Sigmoid colon (tissue), 7 donors: ENCODE measurements at regions of chr11 and their contacts with region 1.

Region 1: GRCh38 chr11:69000831-69001242 is 12.2 kb downstream of the MRGPRF start:
- DNase-seq: peak; percentile 93
- H3K4me3 ChIP-seq: no peak overlapping the region
- H3K27ac ChIP-seq: peak overlapping the region; percentile 91 to 100 (median 98)
- H3K4me1 ChIP-seq: peaks cover 0 to 84% (median 82%) of the 10 kb centered on the region in 4 donors
- H3K27me3 ChIP-seq: no peaks in the 10 kb centered on the region
- CTCF ChIP-seq: peak; percentile 68 to 83 (median 70)
- EP300 ChIP-seq: peak in 2 of 4 donors; percentile 52 to 81
- POLR2A ChIP-seq: no peak

Region 2: GRCh38 chr11:68946465-68947036 is 54.3 kb before region 1 on chr11:
- intact Hi-C with region 1: loop called (anchors 5 kb)
- DNase-seq: peak; percentile 82
- H3K4me3 ChIP-seq: no peak overlapping the region
- H3K27ac ChIP-seq: peak overlapping the region; percentile 90 to 94 (median 92)
- H3K4me1 ChIP-seq: peaks cover 0 to 69% (median 56%) of the 10 kb centered on the region in 4 donors
- H3K27me3 ChIP-seq: no peaks in the 10 kb centered on the region
- CTCF ChIP-seq: no peak
- EP300 ChIP-seq: peak in 3 of 4 donors; percentile 19 to 87 (median 53)
- POLR2A ChIP-seq: no peak

Region 3: GRCh38 chr11:68956142-68956541 is 44.7 kb before region 1 on chr11:
- intact Hi-C with region 1: loop called (anchors 2 kb)
- DNase-seq: peak; percentile 69
- H3K4me3 ChIP-seq: no peak overlapping the region
- H3K27ac ChIP-seq: peak overlapping the region; percentile 32 to 88 (median 85)
- H3K4me1 ChIP-seq: peaks cover 2 to 29% (median 26%) of the 10 kb centered on the region in 4 donors
- H3K27me3 ChIP-seq: no peaks in the 10 kb centered on the region
- CTCF ChIP-seq: peak in 1 of 4 experiments; percentile 34
- EP300 ChIP-seq: no peak
- POLR2A ChIP-seq: no peak

Region 4: GRCh38 chr11:69106031-69106820 is 105.4 kb after region 1 on chr11:
- intact Hi-C with region 1: no loop called
- DNase-seq: no peak
- H3K4me3 ChIP-seq: no peak overlapping the region
- H3K27ac ChIP-seq: peak overlapping the region in 1 of 4 donors; percentile 4
- H3K4me1 ChIP-seq: peaks cover 0 to 10% (median 8%) of the 10 kb centered on the region in 4 donors
- H3K27me3 ChIP-seq: no peaks in the 10 kb centered on the region
- CTCF ChIP-seq: no peak
- EP300 ChIP-seq: no peak
- POLR2A ChIP-seq: no peak